Heart left ventricle (tissue), 16 donors: ENCODE measurements at regions of chr9 and their contacts with region 1.

Region 1: DNA sequence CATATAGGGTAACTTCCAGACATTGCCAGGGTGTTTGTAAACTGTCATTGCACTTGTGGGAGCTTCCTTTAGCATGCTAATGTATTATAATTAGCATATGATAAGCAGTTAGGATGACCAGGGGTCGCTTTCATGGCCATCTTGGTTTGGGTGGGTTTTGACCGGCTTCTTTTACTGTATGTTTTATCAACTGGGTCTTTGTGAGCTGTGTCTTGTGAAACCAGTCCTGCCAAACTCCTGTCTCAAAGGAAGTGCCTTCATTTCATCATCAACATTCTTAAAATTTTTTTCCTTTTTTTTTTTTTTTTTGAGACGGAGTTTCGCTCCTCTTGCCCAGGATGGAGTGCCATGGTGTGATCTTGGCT is 11.9 kb upstream of the MELK start:
- DNase-seq: no peak
- ATAC-seq: no peak
- H3K4me3 ChIP-seq: no peak overlapping the region
- H3K27ac ChIP-seq: no peak overlapping the region
- H3K4me1 ChIP-seq: peaks cover 0 to 6% (median 0%) of the 10 kb centered on the region in 12 donors
- H3K27me3 ChIP-seq: no peaks in the 10 kb centered on the region
- CTCF ChIP-seq: no peak
- POLR2A ChIP-seq: no peak

Region 2: GRCh38 chr9:36441966-36442365 is 118.9 kb before region 1 on chr9:
- intact Hi-C with region 1: loop called in 1 of 10 experiments (anchors 5 kb)
- DNase-seq: no peak
- ATAC-seq: no peak
- H3K4me3 ChIP-seq: no peak overlapping the region
- H3K27ac ChIP-seq: no peak overlapping the region
- H3K4me1 ChIP-seq: peaks cover 0 to 42% (median 21%) of the 10 kb centered on the region in 12 donors
- H3K27me3 ChIP-seq: no peaks in the 10 kb centered on the region
- CTCF ChIP-seq: no peak
- POLR2A ChIP-seq: no peak

Region 3: DNA sequence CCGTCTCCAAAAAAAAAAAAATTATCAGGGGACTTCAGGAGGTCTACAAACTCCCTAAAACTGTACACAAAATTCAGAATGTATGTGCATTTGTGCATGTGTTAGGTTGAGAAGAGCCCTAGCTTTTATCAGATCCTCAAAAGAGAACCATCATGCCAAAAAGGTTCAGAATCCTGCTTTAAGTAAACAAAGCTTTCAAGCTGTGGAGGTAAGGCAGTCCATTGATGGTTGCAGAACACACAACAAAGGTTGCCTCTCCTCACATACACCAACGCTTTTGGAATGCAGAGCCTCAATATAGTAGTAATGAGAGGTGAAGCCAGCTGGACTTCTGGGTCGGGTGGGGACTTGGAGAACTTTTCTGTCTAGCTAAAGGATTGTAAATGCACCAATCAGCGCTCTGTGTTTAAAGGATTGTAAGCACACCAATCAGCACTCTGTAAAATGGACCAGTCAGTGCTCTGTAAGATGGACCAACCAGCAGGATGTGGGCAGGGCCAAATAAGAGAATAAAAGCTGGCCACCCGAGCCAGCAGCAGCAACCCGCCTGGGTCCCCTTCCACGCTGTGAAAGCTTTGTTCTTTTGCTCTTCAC is 102.9 kb before region 1 on chr9:
- intact Hi-C with region 1: loop called in 1 of 10 experiments (anchors 5 kb)
- DNase-seq: no peak
- ATAC-seq: no peak
- H3K4me3 ChIP-seq: no peak overlapping the region
- H3K27ac ChIP-seq: peak overlapping the region in 1 of 12 donors; percentile 32
- H3K4me1 ChIP-seq: peaks cover 0 to 61% (median 17%) of the 10 kb centered on the region in 12 donors
- H3K27me3 ChIP-seq: no peaks in the 10 kb centered on the region
- CTCF ChIP-seq: no peak
- POLR2A ChIP-seq: no peak

Region 4: GRCh38 chr9:36487482-36488388 is 73.1 kb before region 1 on chr9:
- intact Hi-C with region 1: loop called in 2 of 10 experiments (anchors 5 to 10 kb)
- DNase-seq: peak; percentile 93 to 96 (median 94)
- ATAC-seq: peak; percentile 96 to 99 (median 98)
- H3K4me3 ChIP-seq: peak overlapping the region; percentile 15 to 99 (median 86)
- H3K27ac ChIP-seq: peak overlapping the region; percentile 86 to 97 (median 92)
- H3K4me1 ChIP-seq: peaks cover 3 to 34% (median 19%) of the 10 kb centered on the region in 12 donors
- H3K27me3 ChIP-seq: no peaks in the 10 kb centered on the region
- CTCF ChIP-seq: peak in 4 of 12 donors; percentile 3 to 33 (median 12)
- POLR2A ChIP-seq: peak in 1 of 2 donors; percentile 88

Region 5: DNA sequence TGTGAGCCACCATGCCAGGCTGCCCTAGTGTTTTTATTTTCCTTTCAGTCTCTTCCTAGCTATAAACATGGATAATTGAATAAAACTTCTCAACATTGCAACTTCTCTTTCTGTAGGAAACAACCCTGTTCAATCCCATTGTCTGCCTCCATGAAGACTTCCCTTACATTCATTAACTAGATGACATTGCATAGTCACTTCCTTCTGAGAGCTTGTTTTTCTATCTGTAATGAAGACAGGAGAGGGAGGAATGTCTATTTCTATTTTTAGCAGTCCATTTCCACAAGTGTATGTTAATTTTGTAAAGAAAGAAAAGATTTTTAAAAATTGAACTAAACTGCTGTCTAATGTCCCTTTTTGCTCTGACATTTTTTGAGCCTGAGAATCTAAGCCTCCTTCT is 43.7 kb before region 1 on chr9:
- intact Hi-C with region 1: no loop called
- DNase-seq: no peak
- ATAC-seq: no peak
- H3K4me3 ChIP-seq: no peak overlapping the region
- H3K27ac ChIP-seq: no peak overlapping the region
- H3K4me1 ChIP-seq: no peaks in the 10 kb centered on the region
- H3K27me3 ChIP-seq: no peaks in the 10 kb centered on the region
- CTCF ChIP-seq: no peak
- POLR2A ChIP-seq: no peak